Mammary epithelial cell (primary cell): ENCODE measurements at regions of chr16 and their contacts with region 1.

Region 1: GRCh38 chr16:67137605-67138004 is 13.2 kb downstream of the B3GNT9 start:
- DNase-seq: no peak
- H3K4me3 ChIP-seq: no peak overlapping the region
- H3K27ac ChIP-seq: no peak overlapping the region
- H3K4me1 ChIP-seq: no peaks in the 10 kb centered on the region
- H3K27me3 ChIP-seq: no peaks in the 10 kb centered on the region
- CTCF ChIP-seq: no peak

Region 2: DNA sequence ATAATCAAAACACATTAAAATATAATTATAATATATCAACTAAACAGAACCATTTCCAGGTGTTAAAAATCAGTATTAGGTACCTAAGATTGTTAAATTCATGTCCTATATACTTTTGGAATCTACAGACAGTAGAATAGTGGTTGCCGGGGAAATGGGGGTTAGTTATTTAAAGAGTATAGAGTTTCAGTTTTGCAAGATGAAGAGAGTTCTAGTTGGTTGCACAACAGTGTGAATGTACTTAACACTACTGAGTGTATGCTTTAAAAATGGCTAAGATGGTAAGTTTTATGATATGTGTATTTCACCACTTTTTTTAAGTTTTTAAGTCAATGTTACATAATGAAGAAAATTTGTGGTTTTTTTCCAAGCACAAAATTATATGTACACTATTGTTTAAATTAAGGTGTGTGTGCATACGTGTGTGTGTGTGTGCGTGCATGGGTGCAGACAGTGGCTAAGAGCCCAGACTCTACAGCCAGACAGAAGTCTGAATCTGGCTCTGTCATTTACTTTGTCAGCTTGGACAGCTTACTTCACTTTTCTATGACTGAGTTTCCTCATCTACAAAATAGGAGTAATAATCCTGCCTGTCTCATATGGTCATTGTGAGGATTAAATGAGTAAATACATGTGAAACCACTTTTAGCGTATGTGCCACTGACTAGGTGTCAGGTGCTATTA is 53.1 kb before region 1 on chr16:
- CTCF ChIA-PET with region 1: no interaction called
- dilution Hi-C with region 1: loop called (anchors 5 kb)
- in situ Hi-C with region 1: no loop called
- intact Hi-C with region 1: no loop called
- DNase-seq: no peak
- H3K4me3 ChIP-seq: no peak overlapping the region
- H3K27ac ChIP-seq: no peak overlapping the region
- H3K4me1 ChIP-seq: no peaks in the 10 kb centered on the region
- H3K27me3 ChIP-seq: no peaks in the 10 kb centered on the region
- CTCF ChIP-seq: no peak

Region 3: DNA sequence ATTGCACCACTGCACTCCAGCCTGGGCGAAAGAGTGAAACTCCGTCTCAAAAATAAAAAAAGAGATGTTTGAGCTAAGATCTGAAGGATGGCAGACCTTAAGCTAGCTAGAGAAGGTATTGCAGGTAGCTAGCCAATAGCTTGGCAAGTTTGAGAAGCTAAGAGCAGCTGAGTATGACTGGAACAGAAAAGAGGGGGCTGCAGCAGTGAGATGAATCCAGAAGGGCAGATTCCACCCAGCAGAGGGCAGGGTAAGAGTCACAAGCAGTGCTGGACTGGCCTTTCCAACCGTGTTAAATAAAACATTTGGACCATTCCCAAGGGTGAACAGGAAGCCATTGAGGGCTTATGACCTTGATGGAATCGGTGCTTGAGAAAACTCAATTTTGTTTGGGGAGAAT is 33.5 kb before region 1 on chr16:
- CTCF ChIA-PET with region 1: no interaction called
- dilution Hi-C with region 1: no loop called
- in situ Hi-C with region 1: no loop called
- intact Hi-C with region 1: no loop called
- DNase-seq: no peak
- H3K4me3 ChIP-seq: no peak overlapping the region
- H3K27ac ChIP-seq: no peak overlapping the region
- H3K4me1 ChIP-seq: peaks cover 5% of the 10 kb centered on the region
- H3K27me3 ChIP-seq: no peaks in the 10 kb centered on the region
- CTCF ChIP-seq: peak; percentile 34 to 40